Activated naive CD4-positive, alpha-beta T cell treated with anti-CD3 and anti-CD28 coated beads for 36 hours (primary cell): ENCODE measurements at regions of chr1 and their contacts with region 1.

Region 1: GRCh38 chr1:100459358-100460114 is 78.4 kb upstream of the GPR88 start:
- DNase-seq: peak; percentile 86
- H3K4me3 Mint-ChIP-seq: no peak overlapping the region
- H3K27ac Mint-ChIP-seq: peak overlapping the region; percentile 43
- H3K4me1 Mint-ChIP-seq: peaks cover 46% of the 10 kb centered on the region
- H3K27me3 Mint-ChIP-seq: no peaks in the 10 kb centered on the region

Region 2: GRCh38 chr1:99808391-99809115 is 651.0 kb before region 1 on chr1:
- CTCF ChIA-PET with region 1: interaction called, 5 read pairs
- intact Hi-C with region 1: loop called (anchors 1 kb)
- DNase-seq: peak; percentile 53
- H3K4me3 Mint-ChIP-seq: no peak overlapping the region
- H3K27ac Mint-ChIP-seq: no peak overlapping the region
- H3K4me1 Mint-ChIP-seq: peaks cover 8% of the 10 kb centered on the region
- H3K27me3 Mint-ChIP-seq: peaks cover 2% of the 10 kb centered on the region

Region 3: GRCh38 chr1:100132566-100133477 is 326.7 kb before region 1 on chr1 and contains the starts of genes SASS6 and TRMT13:
- CTCF ChIA-PET with region 1: interaction called, 4 read pairs
- intact Hi-C with region 1: loop called (anchors 1 kb)
- DNase-seq: peak; percentile 97
- H3K4me3 Mint-ChIP-seq: peak within 1 kb of the TSS; percentile 91
- H3K27ac Mint-ChIP-seq: peak within 1 kb of the TSS; percentile 87
- H3K4me1 Mint-ChIP-seq: peaks cover 37% of the 10 kb centered on the region
- H3K27me3 Mint-ChIP-seq: no peaks in the 10 kb centered on the region
- total RNA-seq, gene SASS6: 8.2 TPM
- total RNA-seq, gene TRMT13: 12.9 to 16.6 TPM

Region 4: DNA sequence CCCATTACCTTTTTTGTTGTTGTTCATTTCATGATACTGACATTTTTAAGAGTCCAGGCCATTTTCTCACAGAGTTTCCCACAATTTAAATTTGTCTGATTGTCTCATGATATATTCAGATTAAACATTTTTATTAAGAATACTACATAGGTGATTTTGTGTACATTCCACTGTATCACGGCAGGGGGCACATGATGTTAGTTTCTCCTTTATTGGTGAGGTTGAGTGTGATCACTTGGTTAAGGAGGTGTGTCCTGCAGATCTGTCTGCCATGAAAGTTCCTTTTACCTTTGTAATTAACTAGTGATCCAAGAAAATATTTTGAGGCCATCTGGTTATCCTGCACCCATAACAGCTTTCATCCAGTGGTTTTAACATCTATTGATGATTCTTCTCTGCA is 181.7 kb before region 1 on chr1:
- CTCF ChIA-PET with region 1: interaction called, 3 read pairs
- intact Hi-C with region 1: loop called (anchors 1 kb)
- DNase-seq: peak; percentile 40
- H3K4me3 Mint-ChIP-seq: no peak overlapping the region
- H3K27ac Mint-ChIP-seq: no peak overlapping the region
- H3K4me1 Mint-ChIP-seq: peaks cover 12% of the 10 kb centered on the region
- H3K27me3 Mint-ChIP-seq: no peaks in the 10 kb centered on the region

Region 5: DNA sequence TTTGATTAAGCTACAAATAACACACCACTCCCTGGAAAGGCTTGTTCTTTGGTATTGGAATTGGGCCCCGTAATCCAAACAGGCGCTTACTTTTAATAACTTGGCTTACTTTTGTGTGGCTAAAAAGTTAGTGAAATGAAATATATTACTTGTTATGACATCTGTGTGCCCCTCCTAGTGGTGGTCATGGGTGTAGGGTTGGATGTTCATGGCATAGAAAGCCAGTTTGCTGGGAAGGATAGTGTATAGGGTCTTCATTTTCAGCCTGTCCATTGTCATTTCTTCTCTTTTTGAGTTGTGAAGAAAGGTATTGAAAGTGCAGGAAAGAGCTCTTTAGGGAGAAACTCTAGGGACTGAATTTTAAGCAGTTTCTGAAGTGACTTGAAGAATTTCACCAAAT is 101.3 kb before region 1 on chr1:
- CTCF ChIA-PET with region 1: interaction called, 15 read pairs
- intact Hi-C with region 1: no loop called
- DNase-seq: peak; percentile 46
- H3K4me3 Mint-ChIP-seq: no peak overlapping the region
- H3K27ac Mint-ChIP-seq: no peak overlapping the region
- H3K4me1 Mint-ChIP-seq: peaks cover 81% of the 10 kb centered on the region
- H3K27me3 Mint-ChIP-seq: no peaks in the 10 kb centered on the region

Region 6: DNA sequence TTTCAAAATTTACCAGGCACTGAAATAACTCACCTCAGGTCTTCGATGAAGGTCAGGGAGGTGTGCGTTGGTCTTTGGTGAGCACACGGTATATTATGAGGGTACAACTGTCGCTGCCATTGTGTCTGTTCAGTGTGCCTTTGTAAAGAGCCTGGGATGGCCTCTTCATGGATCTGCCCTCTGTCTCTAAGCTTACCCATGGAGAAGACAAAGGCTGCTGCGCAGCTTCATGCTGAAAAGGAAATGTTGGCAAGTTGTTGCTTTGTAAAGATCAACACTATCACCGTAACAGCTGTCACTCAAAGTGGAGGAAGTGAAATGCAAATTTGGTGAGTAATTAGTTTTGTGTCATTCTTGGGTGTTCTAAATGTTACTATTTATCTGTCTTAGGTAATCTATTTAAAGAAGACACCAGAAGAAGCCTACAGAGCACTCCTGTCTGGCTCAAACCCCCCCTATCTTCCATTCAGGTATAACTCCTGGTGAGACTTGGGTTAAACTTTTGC is 35.7 kb before region 1 on chr1:
- CTCF ChIA-PET with region 1: interaction called, 13 read pairs
- intact Hi-C with region 1: no loop called
- DNase-seq: no peak
- H3K4me3 Mint-ChIP-seq: peak overlapping the region; percentile 36
- H3K27ac Mint-ChIP-seq: peak overlapping the region; percentile 59
- H3K4me1 Mint-ChIP-seq: peaks cover 63% of the 10 kb centered on the region
- H3K27me3 Mint-ChIP-seq: no peaks in the 10 kb centered on the region

Region 7: GRCh38 chr1:100606438-100606837 is 146.9 kb after region 1 on chr1:
- CTCF ChIA-PET with region 1: no interaction called
- intact Hi-C with region 1: loop called (anchors 5 kb)
- DNase-seq: peak; percentile 46
- H3K4me3 Mint-ChIP-seq: no peak overlapping the region
- H3K27ac Mint-ChIP-seq: no peak overlapping the region
- H3K4me1 Mint-ChIP-seq: no peaks in the 10 kb centered on the region
- H3K27me3 Mint-ChIP-seq: peaks cover 18% of the 10 kb centered on the region